ENCODE measurements at regions of chr5 and their contacts with region 1.

Region 1: GRCh38 chr5:168377525-168377924 is 86.1 kb downstream of the WWC1 start:
- DNase-seq: no peak
- ATAC-seq: no peak
- H3K4me3 ChIP-seq: no peak overlapping the region
- H3K27ac ChIP-seq: no peak overlapping the region
- H3K4me1 ChIP-seq: no peaks in the 10 kb centered on the region
- H3K27me3 ChIP-seq: no peaks in the 10 kb centered on the region
- CTCF ChIP-seq: no peak
- POLR2A ChIP-seq: no peak
- RAD21 ChIP-seq: no peak

Region 2: DNA sequence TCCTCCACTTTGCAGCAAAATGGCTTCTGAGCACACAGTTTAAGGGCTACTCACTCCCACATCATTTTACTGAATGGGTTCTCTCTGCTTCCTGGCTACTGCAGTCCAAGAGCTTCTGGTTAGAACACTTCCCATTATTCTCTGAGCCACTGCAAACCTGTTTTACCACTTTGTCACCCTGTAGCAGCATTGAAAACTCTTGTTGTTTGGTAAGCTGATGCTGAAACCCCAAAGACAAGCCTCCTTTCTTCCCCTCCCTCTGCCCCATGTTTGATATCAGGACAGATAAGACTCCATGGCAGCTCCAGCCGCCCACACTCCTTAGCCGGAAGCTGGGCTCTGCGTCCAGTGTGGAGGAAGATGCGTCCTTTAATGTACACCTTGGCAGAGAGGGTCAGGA is 24.4 kb after region 1 on chr5:
- CTCF ChIA-PET with region 1: no interaction called
- POLR2A ChIA-PET with region 1: no interaction called
- dilution Hi-C with region 1: no loop called
- in situ Hi-C with region 1: no loop called
- intact Hi-C with region 1: loop called (anchors 2 kb)
- DNase-seq: no peak
- ATAC-seq: no peak
- H3K4me3 ChIP-seq: no peak overlapping the region
- H3K27ac ChIP-seq: no peak overlapping the region
- H3K4me1 ChIP-seq: peaks cover 7% of the 10 kb centered on the region
- H3K27me3 ChIP-seq: no peaks in the 10 kb centered on the region
- CTCF ChIP-seq: no peak
- POLR2A ChIP-seq: no peak
- RAD21 ChIP-seq: no peak

Region 3: GRCh38 chr5:168481330-168481788 is 103.8 kb after region 1 on chr5:
- CTCF ChIA-PET with region 1: no interaction called
- POLR2A ChIA-PET with region 1: no interaction called
- dilution Hi-C with region 1: no loop called
- in situ Hi-C with region 1: no loop called
- intact Hi-C with region 1: no loop called
- DNase-seq: no peak
- ATAC-seq: no peak
- H3K4me3 ChIP-seq: no peak overlapping the region
- H3K27ac ChIP-seq: no peak overlapping the region
- H3K4me1 ChIP-seq: no peaks in the 10 kb centered on the region
- H3K27me3 ChIP-seq: no peaks in the 10 kb centered on the region
- CTCF ChIP-seq: no peak
- POLR2A ChIP-seq: no peak
- RAD21 ChIP-seq: no peak